ENCODE measurements at regions of chr11 and their contacts with region 1.

Region 1: GRCh38 chr11:36131721-36132397 is 157.4 kb downstream of the COMMD9 start:
- DNase-seq: no peak
- H3K4me3 ChIP-seq: no peak overlapping the region
- H3K27me3 ChIP-seq: no peaks in the 10 kb centered on the region
- CTCF ChIP-seq: peak; percentile 88

Region 2: GRCh38 chr11:36142439-36142838 is 10.6 kb after region 1 on chr11:
- CTCF ChIA-PET with region 1: interaction called, 14 read pairs
- POLR2A ChIA-PET with region 1: no interaction called
- DNase-seq: no peak
- H3K4me3 ChIP-seq: no peak overlapping the region
- H3K27me3 ChIP-seq: no peaks in the 10 kb centered on the region
- CTCF ChIP-seq: no peak

Measured in BJ (cell line).